ENCODE measurements at regions of chr19 and their contacts with region 1.

Region 1: GRCh38 chr19:40133491-40133890 is 42.7 kb upstream of the ZNF780A start:
- DNase-seq: no peak
- ATAC-seq: no peak
- H3K4me3 ChIP-seq: no peak overlapping the region
- H3K4me3 Mint-ChIP-seq: no peak overlapping the region
- H3K27ac ChIP-seq: no peak overlapping the region
- H3K27ac Mint-ChIP-seq: no peak overlapping the region
- H3K4me1 ChIP-seq: no peaks in the 10 kb centered on the region
- H3K4me1 Mint-ChIP-seq: no peaks in the 10 kb centered on the region
- H3K27me3 ChIP-seq: peaks cover 0 to 4% of the 10 kb centered on the region in 2 experiments
- H3K27me3 Mint-ChIP-seq: peaks cover 43% of the 10 kb centered on the region
- CTCF ChIP-seq: no peak

Region 2: DNA sequence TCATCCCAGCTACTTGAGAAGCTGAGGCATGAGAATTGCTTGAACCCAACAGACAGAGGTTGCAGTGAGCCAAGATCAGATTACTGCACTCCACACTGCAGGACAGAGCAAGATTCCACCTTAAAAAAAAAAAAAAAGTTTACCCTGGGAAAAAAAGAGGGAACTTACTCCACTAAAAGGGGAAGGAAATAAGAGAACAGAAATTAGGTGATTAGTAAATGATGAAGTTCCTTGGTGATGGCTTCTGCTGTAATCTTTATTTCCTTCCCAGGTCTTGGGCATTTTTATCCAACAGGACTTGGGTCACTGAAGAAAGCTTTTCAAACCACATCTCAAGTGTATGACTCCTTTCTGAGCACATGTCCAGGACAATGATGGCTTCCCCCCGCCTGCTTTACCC is 52.1 kb before region 1 on chr19:
- CTCF ChIA-PET with region 1: no interaction called
- POLR2A ChIA-PET with region 1: no interaction called
- intact Hi-C with region 1: no loop called
- DNase-seq: no peak
- ATAC-seq: no peak
- H3K4me3 ChIP-seq: no peak overlapping the region
- H3K4me3 Mint-ChIP-seq: no peak overlapping the region
- H3K27ac ChIP-seq: no peak overlapping the region
- H3K27ac Mint-ChIP-seq: no peak overlapping the region
- H3K4me1 ChIP-seq: no peaks in the 10 kb centered on the region
- H3K4me1 Mint-ChIP-seq: peaks cover 4% of the 10 kb centered on the region
- H3K27me3 ChIP-seq: no peaks in the 10 kb centered on the region
- H3K27me3 Mint-ChIP-seq: no peaks in the 10 kb centered on the region
- CTCF ChIP-seq: no peak

Region 3: GRCh38 chr19:40110570-40110969 is 22.9 kb before region 1 on chr19:
- CTCF ChIA-PET with region 1: no interaction called
- POLR2A ChIA-PET with region 1: no interaction called
- intact Hi-C with region 1: no loop called
- DNase-seq: no peak
- ATAC-seq: no peak
- H3K4me3 ChIP-seq: no peak overlapping the region
- H3K4me3 Mint-ChIP-seq: no peak overlapping the region
- H3K27ac ChIP-seq: no peak overlapping the region
- H3K27ac Mint-ChIP-seq: no peak overlapping the region
- H3K4me1 ChIP-seq: no peaks in the 10 kb centered on the region
- H3K4me1 Mint-ChIP-seq: no peaks in the 10 kb centered on the region
- H3K27me3 ChIP-seq: no peaks in the 10 kb centered on the region
- H3K27me3 Mint-ChIP-seq: peaks cover 5% of the 10 kb centered on the region
- CTCF ChIP-seq: no peak

Region 4: DNA sequence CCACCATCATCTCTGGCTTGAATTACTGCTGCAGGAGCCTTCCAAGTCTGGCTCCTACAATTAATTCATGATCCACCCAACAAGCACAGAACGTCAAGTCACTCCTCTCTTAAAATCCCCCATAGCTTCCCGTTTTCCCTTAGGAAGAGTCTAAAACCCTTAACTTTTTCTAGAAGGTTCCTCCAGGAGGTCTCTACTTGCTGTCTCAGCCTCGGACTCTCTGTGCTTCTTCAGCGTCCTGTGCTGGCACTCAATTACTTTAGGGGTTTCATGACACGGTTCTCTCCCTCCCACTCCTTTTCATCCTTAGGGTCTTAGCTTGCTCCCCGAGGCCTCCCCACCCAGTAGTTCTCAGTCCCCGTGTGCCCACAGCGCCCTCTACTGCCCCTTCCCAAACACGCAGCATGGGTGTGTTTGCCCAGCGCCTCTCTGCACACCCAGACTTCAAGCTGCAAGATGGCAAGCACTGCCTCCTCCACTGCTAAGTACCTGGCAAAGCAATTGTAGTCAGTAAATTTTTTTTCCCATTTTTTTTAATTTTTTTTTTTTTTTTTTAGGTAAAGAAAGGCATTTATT is 32.0 kb after region 1 on chr19:
- CTCF ChIA-PET with region 1: no interaction called
- POLR2A ChIA-PET with region 1: no interaction called
- intact Hi-C with region 1: loop called in 1 of 2 experiments (anchors 5 kb)
- DNase-seq: peak; percentile 36 to 75 (median 48)
- ATAC-seq: peak; percentile 71
- H3K4me3 ChIP-seq: no peak overlapping the region
- H3K4me3 Mint-ChIP-seq: no peak overlapping the region
- H3K27ac ChIP-seq: no peak overlapping the region
- H3K27ac Mint-ChIP-seq: no peak overlapping the region
- H3K4me1 ChIP-seq: peaks cover 20% of the 10 kb centered on the region
- H3K4me1 Mint-ChIP-seq: peaks cover 18% of the 10 kb centered on the region
- H3K27me3 ChIP-seq: no peaks in the 10 kb centered on the region
- H3K27me3 Mint-ChIP-seq: no peaks in the 10 kb centered on the region
- CTCF ChIP-seq: peak; percentile 53

Measured in CD4-positive, alpha-beta T cell (primary cell).